GM13977 (cell line): ENCODE measurements at regions of chr16 and their contacts with region 1.

Region 1: GRCh38 chr16:79707876-79708275 is 107.3 kb upstream of the MAF start:
- DNase-seq: no peak
- CTCF ChIP-seq: no peak

Region 2: DNA sequence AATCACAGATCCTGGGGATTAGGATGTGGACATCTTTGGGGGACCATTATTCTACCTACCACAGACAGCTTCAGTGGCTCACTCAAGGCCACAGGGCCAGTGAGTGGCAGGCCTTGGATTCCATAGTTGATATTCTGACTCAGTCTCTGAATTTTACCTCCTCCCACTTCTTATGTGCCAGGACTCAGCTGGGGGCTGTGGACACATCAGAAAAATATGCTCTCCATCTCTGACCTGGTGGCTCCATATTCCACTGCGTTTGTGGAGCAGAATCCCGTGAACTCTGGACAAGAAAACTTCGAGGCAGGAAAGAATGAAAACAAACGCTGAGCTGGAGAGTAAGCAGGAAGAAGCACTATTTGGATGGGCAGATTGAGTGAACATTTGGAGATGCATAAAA is 194.5 kb after region 1 on chr16:
- in situ Hi-C with region 1: no loop called
- DNase-seq: no peak
- CTCF ChIP-seq: no peak

Region 3: GRCh38 chr16:80466024-80466987 is 758.4 kb after region 1 on chr16:
- in situ Hi-C with region 1: loop called (anchors 25 kb)
- DNase-seq: peak; percentile 58
- CTCF ChIP-seq: peak; percentile 83